CD8-positive, alpha-beta memory T cell (primary cell): ENCODE measurements at regions of chrX and their contacts with region 1.

Region 1: GRCh38 chrX:103941201-103941975 is 21.0 kb upstream of the TMSB15B start:
- DNase-seq: peak in 2 of 5 donors; percentile 7 to 22
- H3K4me3 ChIP-seq: no peak overlapping the region
- H3K4me3 Mint-ChIP-seq: no peak overlapping the region
- H3K27ac ChIP-seq: no peak overlapping the region
- H3K27ac Mint-ChIP-seq: no peak overlapping the region
- H3K4me1 ChIP-seq: no peaks in the 10 kb centered on the region
- H3K4me1 Mint-ChIP-seq: peaks cover 13 to 44% (median 31%) of the 10 kb centered on the region in 3 donors
- H3K27me3 ChIP-seq: no peaks in the 10 kb centered on the region
- H3K27me3 Mint-ChIP-seq: peaks cover 0 to 10% of the 10 kb centered on the region in 2 donors

Region 2: DNA sequence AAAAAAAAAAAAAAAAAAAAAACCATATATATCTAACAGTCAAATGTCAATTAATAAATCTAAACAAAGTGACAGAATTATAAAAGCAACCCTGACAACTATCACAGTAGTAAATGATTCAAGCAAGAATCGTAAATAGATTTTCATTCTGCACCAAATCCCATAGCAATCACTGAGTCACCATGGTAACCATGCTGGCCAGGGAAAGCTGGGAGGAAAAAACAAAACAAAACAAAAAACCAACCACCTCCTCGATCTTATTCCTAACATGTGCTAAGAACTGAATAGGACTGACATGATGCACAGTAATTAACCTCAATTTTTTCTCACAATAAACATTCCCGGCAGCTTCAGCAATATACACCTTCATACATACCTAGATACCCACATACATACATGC is 391.5 kb before region 1 on chrX:
- CTCF ChIA-PET with region 1: no interaction called
- POLR2A ChIA-PET with region 1: no interaction called
- DNase-seq: no peak
- H3K4me3 ChIP-seq: no peak overlapping the region
- H3K4me3 Mint-ChIP-seq: no peak overlapping the region
- H3K27ac ChIP-seq: no peak overlapping the region
- H3K27ac Mint-ChIP-seq: no peak overlapping the region
- H3K4me1 ChIP-seq: peaks cover 10% of the 10 kb centered on the region
- H3K4me1 Mint-ChIP-seq: peaks cover 6 to 10% (median 6%) of the 10 kb centered on the region in 3 donors
- H3K27me3 ChIP-seq: no peaks in the 10 kb centered on the region
- H3K27me3 Mint-ChIP-seq: peaks cover 0 to 4% of the 10 kb centered on the region in 2 donors

Region 3: DNA sequence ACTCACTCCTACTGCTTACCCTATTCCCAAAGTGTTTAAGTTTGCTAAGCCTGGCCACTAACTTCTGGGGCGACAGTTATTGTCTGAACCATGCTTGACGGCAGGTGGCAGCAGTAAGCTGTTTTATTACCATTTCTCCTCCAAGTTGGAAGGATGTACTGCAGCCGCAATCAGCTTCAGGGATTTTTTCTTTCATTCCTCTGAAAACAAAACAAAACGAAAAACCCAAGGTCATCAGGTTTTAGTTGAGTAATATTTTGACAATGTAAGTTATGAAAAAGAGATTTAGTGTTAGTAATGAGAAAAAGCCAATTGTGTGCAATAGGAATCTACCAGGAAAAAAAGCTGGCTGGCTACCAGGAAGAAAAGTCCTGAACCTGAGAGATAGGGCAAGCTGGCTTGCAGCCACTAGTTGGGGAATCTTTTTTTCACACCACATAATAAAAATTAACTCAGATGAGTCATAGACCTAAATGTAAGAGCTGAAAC is 96.2 kb before region 1 on chrX:
- CTCF ChIA-PET with region 1: interaction called, 12 read pairs
- POLR2A ChIA-PET with region 1: no interaction called
- DNase-seq: peak; percentile 14 to 49 (median 18)
- H3K4me3 ChIP-seq: no peak overlapping the region
- H3K4me3 Mint-ChIP-seq: no peak overlapping the region
- H3K27ac ChIP-seq: no peak overlapping the region
- H3K27ac Mint-ChIP-seq: no peak overlapping the region
- H3K4me1 ChIP-seq: no peaks in the 10 kb centered on the region
- H3K4me1 Mint-ChIP-seq: no peaks in the 10 kb centered on the region
- H3K27me3 ChIP-seq: no peaks in the 10 kb centered on the region
- H3K27me3 Mint-ChIP-seq: peaks cover 0 to 9% of the 10 kb centered on the region in 2 donors

Region 4: GRCh38 chrX:103918581-103919269 is 22.7 kb before region 1 on chrX:
- CTCF ChIA-PET with region 1: interaction called, 26 read pairs
- POLR2A ChIA-PET with region 1: no interaction called
- DNase-seq: peak; percentile 37 to 74 (median 58)
- H3K4me3 ChIP-seq: peak overlapping the region; percentile 49
- H3K4me3 Mint-ChIP-seq: peak overlapping the region; percentile 89 to 95 (median 93)
- H3K27ac ChIP-seq: peak overlapping the region; percentile 61
- H3K27ac Mint-ChIP-seq: peak overlapping the region; percentile 90 to 99 (median 94)
- H3K4me1 ChIP-seq: peaks cover 10% of the 10 kb centered on the region
- H3K4me1 Mint-ChIP-seq: peaks cover 22 to 36% (median 32%) of the 10 kb centered on the region in 3 donors
- H3K27me3 ChIP-seq: no peaks in the 10 kb centered on the region
- H3K27me3 Mint-ChIP-seq: peaks cover 0 to 4% of the 10 kb centered on the region in 2 donors

Region 5: DNA sequence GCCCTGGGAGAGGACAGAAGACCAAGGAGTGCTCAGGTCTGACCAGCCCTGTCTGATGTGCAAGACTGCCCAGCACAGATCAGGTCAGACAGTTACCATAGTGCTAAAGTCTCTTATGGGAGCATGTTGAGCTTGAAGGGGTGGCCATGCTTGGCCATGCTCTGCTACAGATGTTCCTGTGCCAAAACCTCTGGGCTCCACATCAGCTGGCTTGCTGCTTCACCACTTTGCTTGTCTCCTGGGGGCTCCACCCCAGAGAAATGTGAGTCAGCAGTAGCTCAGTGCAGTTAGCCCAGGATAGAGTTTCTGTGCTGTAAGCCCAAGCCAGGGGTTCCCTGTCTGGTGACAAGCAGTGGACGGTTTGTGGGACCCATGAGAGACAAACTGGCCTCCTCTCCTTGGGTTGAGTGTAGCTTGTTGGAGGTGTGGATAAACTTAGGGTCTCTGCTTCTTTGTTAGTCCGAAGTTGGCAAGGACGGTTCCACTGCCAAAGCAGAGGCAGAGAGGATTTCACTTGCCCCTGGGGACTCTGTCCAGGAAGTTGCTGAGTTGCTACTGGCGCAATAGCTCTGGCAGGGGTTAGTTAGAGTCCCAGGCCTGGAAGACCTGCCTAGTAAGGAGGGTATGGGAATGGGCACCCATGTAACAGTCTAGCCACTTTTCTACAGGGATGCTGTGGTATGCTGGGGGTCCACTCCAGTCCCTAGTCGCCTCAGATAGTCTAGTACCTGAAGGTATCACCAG is 143.3 kb after region 1 on chrX:
- CTCF ChIA-PET with region 1: no interaction called
- POLR2A ChIA-PET with region 1: no interaction called
- DNase-seq: no peak
- H3K4me3 ChIP-seq: no peak overlapping the region
- H3K4me3 Mint-ChIP-seq: no peak overlapping the region
- H3K27ac ChIP-seq: no peak overlapping the region
- H3K27ac Mint-ChIP-seq: no peak overlapping the region
- H3K4me1 ChIP-seq: no peaks in the 10 kb centered on the region
- H3K4me1 Mint-ChIP-seq: no peaks in the 10 kb centered on the region
- H3K27me3 ChIP-seq: no peaks in the 10 kb centered on the region
- H3K27me3 Mint-ChIP-seq: peaks cover 6 to 9% of the 10 kb centered on the region in 2 donors